ENCODE measurements at regions of chr12 and their contacts with region 1.

Region 1: GRCh38 chr12:49347384-49348237 is 923 bp downstream of the DNAJC22 start:
- DNase-seq: peak; percentile 95 to 98
- ATAC-seq: peak; percentile 84 to 90
- H3K4me3 ChIP-seq: peak overlapping the region; percentile 50
- H3K27ac ChIP-seq: peak overlapping the region; percentile 80 to 86
- H3K4me1 ChIP-seq: peaks cover 48% of the 10 kb centered on the region
- CTCF ChIP-seq: peak; percentile 98
- EP300 ChIP-seq: no peak
- POLR2A ChIP-seq: peak; percentile 84
- RAD21 ChIP-seq: peak; percentile 32 to 55; a peak in 4 of 5 replicates

Region 2: GRCh38 chr12:48739618-48740273 is 607.9 kb before region 1 on chr12:
- CTCF ChIA-PET with region 1: no interaction called
- POLR2A ChIA-PET with region 1: no interaction called
- DNase-seq: no peak
- ATAC-seq: no peak
- H3K4me3 ChIP-seq: no peak overlapping the region
- H3K27ac ChIP-seq: no peak overlapping the region
- H3K4me1 ChIP-seq: no peaks in the 10 kb centered on the region
- CTCF ChIP-seq: no peak
- EP300 ChIP-seq: no peak
- POLR2A ChIP-seq: no peak
- RAD21 ChIP-seq: no peak

Region 3: DNA sequence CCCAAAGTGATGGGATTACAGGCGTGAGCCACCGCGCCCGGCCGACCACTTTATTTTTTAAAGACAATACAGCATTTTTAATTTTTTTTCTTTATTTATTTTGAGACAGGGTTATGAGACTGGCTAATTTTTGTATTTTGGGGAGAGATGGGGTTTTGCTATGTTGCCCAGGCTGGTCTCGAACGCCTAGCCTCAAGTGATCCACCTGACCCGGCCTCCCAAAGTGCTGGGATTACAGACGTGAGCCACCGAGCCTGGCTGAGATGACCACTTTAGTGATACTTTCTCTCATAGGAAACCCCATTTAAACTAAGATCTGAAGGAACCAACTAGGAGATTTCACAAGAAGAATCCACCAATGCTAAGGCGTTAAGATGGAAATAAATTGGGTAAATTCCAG is 276.6 kb before region 1 on chr12:
- CTCF ChIA-PET with region 1: no interaction called
- POLR2A ChIA-PET with region 1: no interaction called
- DNase-seq: no peak
- ATAC-seq: no peak
- H3K4me3 ChIP-seq: no peak overlapping the region
- H3K27ac ChIP-seq: no peak overlapping the region
- H3K4me1 ChIP-seq: peaks cover 7% of the 10 kb centered on the region; the same call in 2 of the 3 replicates
- CTCF ChIP-seq: no peak
- EP300 ChIP-seq: no peak
- POLR2A ChIP-seq: no peak
- RAD21 ChIP-seq: no peak

Region 4: GRCh38 chr12:49304161-49304560 is 43.5 kb before region 1 on chr12:
- CTCF ChIA-PET with region 1: interaction called, 18 read pairs
- POLR2A ChIA-PET with region 1: no interaction called
- DNase-seq: no peak
- ATAC-seq: peak in 1 of 2 experiments; percentile 37; a peak in 2 of 6 replicates
- H3K4me3 ChIP-seq: no peak overlapping the region
- H3K27ac ChIP-seq: no peak overlapping the region
- H3K4me1 ChIP-seq: no peaks in the 10 kb centered on the region
- CTCF ChIP-seq: no peak
- EP300 ChIP-seq: no peak
- POLR2A ChIP-seq: no peak
- RAD21 ChIP-seq: no peak

Region 5: DNA sequence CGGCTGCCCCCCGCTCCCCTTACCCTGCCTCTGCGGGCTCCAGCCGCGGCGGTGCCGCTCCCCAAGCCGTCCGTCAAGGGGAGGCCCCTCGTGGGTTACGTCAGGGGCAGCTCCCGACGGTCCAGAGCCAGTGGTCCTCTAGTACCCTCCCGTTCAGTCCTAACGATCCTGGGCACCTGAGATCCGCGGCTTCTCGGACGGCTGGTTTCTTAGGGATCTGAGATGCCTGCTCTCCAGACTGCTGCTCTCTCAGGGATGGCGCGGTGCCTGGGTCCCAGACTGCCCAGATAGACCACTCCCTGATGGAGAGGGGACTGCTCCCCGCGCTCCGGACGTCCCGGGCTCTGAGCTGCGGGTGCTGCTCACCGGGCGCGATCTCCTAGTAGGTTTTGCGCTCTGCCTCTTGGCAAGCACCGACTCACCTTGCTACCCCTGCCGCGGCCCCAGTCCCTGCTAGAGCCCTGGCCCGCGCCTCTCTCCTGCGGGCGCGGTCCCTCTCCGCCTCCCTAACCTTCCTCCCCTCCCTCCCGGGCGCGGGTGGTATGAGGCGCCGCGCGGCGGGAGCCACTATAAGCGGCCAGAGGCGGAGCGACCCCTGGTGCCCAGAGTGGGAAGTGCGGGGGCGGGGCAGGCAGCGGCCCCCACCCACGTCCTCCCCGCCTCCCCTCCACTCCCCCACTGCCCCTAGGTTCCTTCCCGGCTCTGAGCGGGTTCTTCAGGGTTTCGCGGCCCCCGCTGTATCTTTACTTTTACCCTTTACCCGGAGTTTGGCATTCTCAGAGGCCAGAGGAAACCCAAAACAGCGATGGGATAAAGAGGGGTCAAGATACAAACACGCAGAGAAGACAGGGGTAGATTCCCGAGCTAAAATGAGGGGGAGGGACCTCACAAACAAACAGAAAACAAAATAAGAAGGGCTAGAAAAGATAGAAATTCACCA is 10.7 kb before region 1 on chr12 and contains the start of gene C1QL4:
- CTCF ChIA-PET with region 1: interaction called, 144 read pairs
- POLR2A ChIA-PET with region 1: interaction called, 4 read pairs
- DNase-seq: peak; percentile 75 to 84
- ATAC-seq: peak; percentile 78 to 88
- H3K4me3 ChIP-seq: peak within 1 kb of the TSS; percentile 64
- H3K27ac ChIP-seq: peak within 1 kb of the TSS; percentile 71 to 82
- H3K4me1 ChIP-seq: peaks cover 12% of the 10 kb centered on the region; the same call in 2 of the 3 replicates
- CTCF ChIP-seq: peak; percentile 95
- EP300 ChIP-seq: no peak
- POLR2A ChIP-seq: peak; percentile 62
- RAD21 ChIP-seq: peak; percentile 28 to 53
- polyA plus RNA-seq, gene C1QL4: 0.99 and 1.5 TPM in 2 replicates

Region 6: DNA sequence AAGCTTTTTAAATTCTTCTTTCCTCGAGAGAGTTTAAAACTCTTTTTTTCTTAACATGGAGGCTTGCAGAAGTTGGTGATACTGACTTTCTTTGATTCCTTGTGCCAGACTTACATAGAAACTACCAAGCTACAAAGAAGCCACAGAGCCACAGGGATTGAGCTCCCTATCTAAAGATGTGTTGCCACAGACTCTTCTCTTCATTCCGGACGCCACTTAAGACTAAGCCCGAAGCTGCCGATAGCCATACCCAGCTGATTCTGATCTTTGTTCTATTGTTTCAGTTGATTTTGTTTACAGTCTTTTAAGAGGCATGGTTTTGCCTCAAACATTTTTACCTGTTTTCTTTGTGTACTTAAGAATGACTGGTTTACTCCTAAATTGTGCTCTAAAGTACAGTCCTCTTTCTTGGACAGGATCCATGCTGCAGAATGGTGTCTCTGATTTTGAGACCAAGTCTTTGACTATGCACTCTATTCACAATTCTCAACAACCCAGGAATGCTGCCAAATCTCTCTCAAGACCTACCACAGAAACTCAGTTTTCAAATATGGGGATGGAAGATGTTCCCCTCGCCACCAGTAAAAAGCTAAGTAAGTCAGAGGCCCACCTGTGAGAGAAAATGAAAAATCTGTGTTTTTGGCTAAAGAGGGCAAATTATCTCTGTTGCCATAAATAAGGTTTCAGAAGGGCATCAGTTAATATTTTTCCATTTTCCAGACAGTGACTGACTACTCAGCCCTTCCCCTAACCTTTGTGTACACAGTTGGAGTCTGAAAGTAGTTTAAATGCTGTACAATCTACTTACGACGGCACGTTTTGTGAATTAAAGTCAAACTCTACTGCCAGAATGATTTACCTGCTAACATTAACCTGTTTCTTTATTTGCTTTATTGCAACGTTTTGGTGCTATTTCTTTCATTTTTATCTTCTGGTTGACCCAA is 149.1 kb after region 1 on chr12:
- CTCF ChIA-PET with region 1: interaction called, 12 read pairs
- POLR2A ChIA-PET with region 1: no interaction called
- DNase-seq: peak in 1 of 2 experiments; percentile 57
- ATAC-seq: peak; percentile 78 to 82; a peak in 5 of 6 replicates
- H3K4me3 ChIP-seq: peak overlapping the region; percentile 17; the same call in 2 of the 3 replicates
- H3K27ac ChIP-seq: peak overlapping the region; percentile 74 to 81
- H3K4me1 ChIP-seq: peaks cover 39% of the 10 kb centered on the region
- CTCF ChIP-seq: no peak
- EP300 ChIP-seq: 0 out of 5 replicates have a peak, but pooled peaks have one; percentile 0 to 30
- POLR2A ChIP-seq: no peak
- RAD21 ChIP-seq: no peak

Region 7: DNA sequence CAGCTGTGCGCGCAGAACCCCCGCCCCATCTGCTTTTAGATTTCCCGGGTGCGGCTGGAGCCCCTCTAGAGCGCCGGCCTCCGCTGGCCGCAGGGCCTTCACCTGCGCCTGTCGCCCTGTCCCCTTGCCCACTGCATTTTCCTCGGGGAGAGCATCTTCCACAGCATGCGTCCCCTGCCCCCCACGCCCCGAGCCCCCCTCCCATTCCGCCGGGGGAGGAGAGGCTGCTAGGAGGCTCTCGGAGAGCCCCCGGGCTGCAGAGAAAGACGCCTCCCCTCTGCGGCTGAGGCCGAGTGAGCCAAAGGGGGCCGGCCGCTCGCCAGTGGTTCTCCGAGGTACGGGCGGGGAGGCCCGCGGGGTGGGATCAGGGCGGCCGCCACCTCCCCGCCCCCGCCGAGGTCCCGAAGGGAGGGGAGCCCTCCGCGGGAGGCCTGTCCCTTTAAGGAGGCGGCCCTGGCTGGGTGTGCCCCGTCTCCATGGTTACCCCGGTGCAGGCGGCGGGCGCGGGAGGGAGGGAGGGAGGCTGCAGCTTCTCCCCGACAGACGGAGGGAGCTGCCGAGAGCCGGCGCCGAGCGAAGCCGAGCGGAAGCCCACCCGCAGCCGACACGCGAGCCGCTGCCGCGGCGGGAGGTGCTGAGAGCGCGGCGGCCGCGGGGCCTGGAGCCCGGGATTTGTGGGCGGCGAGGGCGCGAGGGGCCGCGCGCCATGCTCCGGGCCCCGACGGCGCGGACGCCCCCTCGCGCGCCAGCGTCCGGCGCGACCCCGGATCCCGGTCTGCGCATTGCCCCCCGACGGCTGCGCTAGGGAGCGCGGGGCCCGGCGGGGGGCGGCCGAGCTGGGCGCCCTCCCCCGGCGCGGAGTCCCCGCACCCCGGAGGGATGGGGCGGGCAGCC is 191.1 kb after region 1 on chr12 and contains the start of gene KCNH3:
- CTCF ChIA-PET with region 1: interaction called, 19 read pairs
- POLR2A ChIA-PET with region 1: no interaction called
- DNase-seq: peak; percentile 71 to 88
- ATAC-seq: peak; percentile 72 to 77
- H3K4me3 ChIP-seq: peak within 1 kb of the TSS; percentile 76
- H3K27ac ChIP-seq: peak within 1 kb of the TSS; percentile 65 to 91
- H3K4me1 ChIP-seq: peaks cover 32% of the 10 kb centered on the region
- CTCF ChIP-seq: no peak
- EP300 ChIP-seq: no peak
- POLR2A ChIP-seq: no peak
- RAD21 ChIP-seq: no peak
- polyA plus RNA-seq, gene KCNH3: 1.0 and 1.2 TPM in 2 replicates

Region 8: DNA sequence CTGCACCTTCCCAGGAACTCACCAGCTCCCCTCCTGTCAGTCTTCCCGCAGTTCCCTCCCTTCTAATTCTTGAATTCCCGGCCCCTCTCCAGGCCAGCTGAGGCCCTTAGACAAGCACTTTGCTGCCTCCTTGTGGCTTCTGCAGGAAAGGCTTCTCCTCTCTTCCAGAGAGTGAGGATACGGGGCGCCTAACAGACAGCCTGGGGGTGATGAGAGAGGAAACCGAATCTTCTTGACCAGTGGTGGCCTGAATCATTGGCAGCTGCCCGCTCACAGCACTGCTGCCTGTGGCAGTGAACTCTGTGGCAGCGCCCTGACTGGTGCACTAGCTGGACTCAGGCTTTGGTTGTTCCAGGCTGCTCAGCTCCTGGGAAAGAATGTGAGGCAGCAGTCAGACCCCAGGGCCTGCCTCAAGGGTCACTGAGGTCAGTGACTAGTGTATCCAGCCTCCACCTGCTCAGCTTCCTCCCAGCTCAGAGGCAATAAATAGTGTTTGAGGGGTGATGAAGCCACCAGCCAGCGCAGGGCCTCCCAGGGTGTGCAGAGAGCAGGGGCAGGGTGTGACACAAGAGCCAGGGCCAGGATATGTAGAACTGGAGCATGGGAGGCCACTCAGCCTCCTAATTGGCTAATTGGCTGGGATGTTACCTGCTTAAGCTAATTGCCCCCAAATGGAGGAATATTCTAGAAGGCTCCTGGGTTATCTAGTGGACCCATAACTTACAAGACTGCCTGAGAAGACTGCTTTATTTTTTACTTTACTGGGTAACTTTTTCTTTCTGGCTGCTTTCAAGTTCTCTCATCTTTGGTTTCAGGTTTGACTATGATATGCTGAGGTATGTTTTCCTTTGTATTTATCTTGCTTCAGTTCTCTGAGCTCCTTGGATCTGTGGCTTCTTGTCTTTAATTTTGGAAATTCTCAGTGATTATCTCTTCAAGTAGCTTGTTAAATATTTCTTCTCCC is 233.2 kb after region 1 on chr12:
- CTCF ChIA-PET with region 1: interaction called, 13 read pairs
- POLR2A ChIA-PET with region 1: no interaction called
- DNase-seq: peak; percentile 83 to 86
- ATAC-seq: peak; percentile 95 to 98
- H3K4me3 ChIP-seq: no peak overlapping the region
- H3K27ac ChIP-seq: 0 out of 6 replicates have a peak overlapping the region, but pooled peaks of 1 of the 2 experiments have one; percentile 22
- H3K4me1 ChIP-seq: peaks cover 16% of the 10 kb centered on the region; the same call in 2 of the 3 replicates
- CTCF ChIP-seq: peak; percentile 81
- EP300 ChIP-seq: no peak
- POLR2A ChIP-seq: no peak
- RAD21 ChIP-seq: peak; percentile 83 to 90

Region 9: GRCh38 chr12:49866859-49867579 is 519.4 kb after region 1 on chr12:
- CTCF ChIA-PET with region 1: no interaction called
- POLR2A ChIA-PET with region 1: no interaction called
- DNase-seq: peak; percentile 66 to 95
- ATAC-seq: peak; percentile 55 to 92
- H3K4me3 ChIP-seq: no peak overlapping the region
- H3K27ac ChIP-seq: peak overlapping the region in 1 of 2 experiments; percentile 22; a peak in 1 of 6 replicates
- H3K4me1 ChIP-seq: no peaks in the 10 kb centered on the region; the same call in 2 of the 3 replicates
- CTCF ChIP-seq: peak; percentile 88
- EP300 ChIP-seq: no peak
- POLR2A ChIP-seq: no peak
- RAD21 ChIP-seq: peak; percentile 84 to 91